Activated B cell treated with CpG ODN at 0.5 μM for 24 hours (primary cell): ENCODE measurements at regions of chr1 and their contacts with region 1.

Region 1: DNA sequence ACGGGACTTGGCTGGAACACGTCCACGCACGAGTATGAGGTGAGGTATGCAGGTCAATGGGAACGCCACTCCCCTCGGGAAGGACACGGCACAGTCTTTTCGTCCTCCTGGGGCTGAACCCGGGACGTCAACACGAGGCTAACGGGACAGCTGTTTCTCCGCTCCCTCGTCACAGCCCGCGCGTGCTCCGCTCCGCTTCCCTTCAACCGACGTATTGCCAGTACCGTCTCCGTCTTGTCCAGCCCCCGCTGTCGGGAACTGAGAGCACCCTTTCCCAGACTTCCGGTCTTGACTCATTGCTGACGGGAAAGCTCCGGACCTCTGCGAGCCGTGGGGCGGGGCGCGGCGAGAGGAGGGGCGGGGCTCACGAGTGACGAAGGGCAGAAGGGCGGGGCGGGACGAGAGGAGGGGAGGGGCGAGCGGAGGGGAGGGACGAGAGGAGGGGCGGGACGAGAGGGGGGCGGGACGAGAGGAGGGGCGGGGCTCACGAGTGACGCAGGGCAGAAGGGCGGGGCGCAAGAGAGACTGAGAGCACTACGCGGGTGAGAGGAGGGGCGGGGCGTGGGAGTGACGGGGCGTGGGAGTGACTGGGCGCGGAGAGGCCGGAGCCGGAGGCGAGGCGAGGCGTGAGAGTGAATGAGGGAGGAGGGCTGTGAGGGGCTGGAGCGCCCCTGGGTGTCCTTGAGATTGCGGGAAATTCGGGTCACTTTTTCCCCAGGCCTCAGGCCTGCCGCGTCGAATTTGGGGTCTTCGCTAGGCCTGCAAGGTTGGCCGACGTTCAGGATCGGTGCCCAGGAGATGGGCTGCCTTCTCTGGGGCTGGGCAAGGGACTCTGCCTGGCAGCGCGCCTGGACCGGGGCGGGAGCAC is 22.2 kb upstream of the CFAP126 start:
- DNase-seq: peak; percentile 90
- ATAC-seq: peak; percentile 95
- H3K4me3 Mint-ChIP-seq: peak overlapping the region; percentile 89
- H3K27ac Mint-ChIP-seq: peak overlapping the region; percentile 90
- H3K4me1 Mint-ChIP-seq: peaks cover 17% of the 10 kb centered on the region
- H3K27me3 Mint-ChIP-seq: no peaks in the 10 kb centered on the region
- CTCF ChIP-seq: no peak

Region 2: DNA sequence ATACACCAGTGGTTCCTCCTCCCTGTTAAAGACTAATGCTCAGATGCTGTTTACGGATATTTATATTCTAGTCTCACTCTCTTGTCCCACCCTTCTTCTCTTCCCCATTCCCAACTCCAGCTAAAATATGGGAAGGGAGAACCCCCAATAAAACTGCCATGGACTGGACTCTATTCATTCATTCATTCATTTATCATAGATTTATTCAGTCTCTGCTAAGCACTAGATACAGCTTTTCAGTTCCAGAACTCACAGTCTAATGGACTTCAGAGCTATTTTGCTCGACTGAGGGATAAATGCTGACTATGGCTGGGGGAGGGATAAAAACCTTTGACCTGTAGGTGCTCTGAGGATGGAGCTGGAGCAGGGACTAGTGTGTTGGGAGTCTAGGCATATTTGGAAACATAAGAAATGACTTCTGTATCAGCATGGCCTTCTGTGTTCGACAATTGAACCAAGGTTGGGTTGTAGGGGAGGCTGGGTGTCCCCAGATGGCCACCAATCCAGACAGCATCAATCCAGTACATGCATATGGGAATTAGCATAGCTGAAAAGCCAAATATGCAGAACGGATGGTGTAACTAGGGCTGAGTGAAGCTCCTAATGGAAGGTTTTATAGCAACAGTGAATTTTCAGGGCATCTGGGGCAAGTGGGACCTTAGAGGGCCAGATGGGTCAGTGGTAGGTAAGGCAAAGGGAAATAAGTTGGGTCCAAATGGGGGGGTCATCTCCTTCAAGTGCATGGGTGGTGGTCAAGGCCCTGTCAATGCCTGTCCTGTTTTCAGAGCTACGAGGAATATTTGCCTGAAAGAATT is 170.6 kb before region 1 on chr1:
- CTCF ChIA-PET with region 1: no interaction called
- POLR2A ChIA-PET with region 1: interaction called, 11 read pairs
- intact Hi-C with region 1: no loop called
- DNase-seq: no peak
- ATAC-seq: no peak
- H3K4me3 Mint-ChIP-seq: no peak overlapping the region
- H3K27ac Mint-ChIP-seq: no peak overlapping the region
- H3K4me1 Mint-ChIP-seq: peaks cover 22% of the 10 kb centered on the region
- H3K27me3 Mint-ChIP-seq: peaks cover 37% of the 10 kb centered on the region
- CTCF ChIP-seq: no peak

Region 3: GRCh38 chr1:161420763-161421455 is 31.0 kb after region 1 on chr1:
- CTCF ChIA-PET with region 1: no interaction called
- POLR2A ChIA-PET with region 1: no interaction called
- intact Hi-C with region 1: loop called (anchors 1 kb)
- DNase-seq: no peak
- ATAC-seq: no peak
- H3K4me3 Mint-ChIP-seq: peak overlapping the region; percentile 85
- H3K27ac Mint-ChIP-seq: no peak overlapping the region
- H3K4me1 Mint-ChIP-seq: peaks cover 5% of the 10 kb centered on the region
- H3K27me3 Mint-ChIP-seq: peaks cover 2% of the 10 kb centered on the region
- CTCF ChIP-seq: no peak